PC-9 (cell line): ENCODE measurements at regions of chr17 and their contacts with region 1.

Region 1: DNA sequence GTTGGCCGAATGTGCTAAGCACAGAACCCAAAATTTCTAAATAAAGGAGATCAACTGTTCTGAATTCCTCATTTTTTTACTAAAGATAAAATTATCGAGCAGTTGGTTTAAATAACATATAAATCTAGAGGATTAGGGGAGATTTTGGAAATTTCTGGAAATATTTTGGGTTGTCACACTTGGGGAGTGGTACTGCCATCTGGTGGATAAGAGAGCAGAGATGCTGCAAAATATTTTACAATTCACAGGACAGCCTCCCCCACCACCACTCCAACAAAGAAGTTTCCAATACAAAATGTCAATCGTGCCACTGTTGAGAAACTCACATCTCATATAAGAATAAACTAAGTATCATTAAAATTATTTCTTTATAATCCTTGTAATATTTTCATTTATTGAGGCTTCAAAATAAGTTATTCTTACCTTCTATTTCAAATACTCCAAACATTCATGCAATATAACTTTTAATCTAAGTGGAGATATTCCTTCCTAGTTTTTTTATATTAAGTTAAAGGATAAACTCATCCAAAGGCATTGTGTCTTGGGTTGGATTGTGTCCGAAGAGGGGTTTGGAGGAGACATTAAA is 17.0 kb upstream of the ABCA8 start:
- DNase-seq: no peak
- H3K4me3 ChIP-seq: no peak overlapping the region
- H3K27ac ChIP-seq: no peak overlapping the region
- H3K4me1 ChIP-seq: no peaks in the 10 kb centered on the region
- H3K27me3 ChIP-seq: no peaks in the 10 kb centered on the region
- CTCF ChIP-seq: peak; percentile 78

Region 2: DNA sequence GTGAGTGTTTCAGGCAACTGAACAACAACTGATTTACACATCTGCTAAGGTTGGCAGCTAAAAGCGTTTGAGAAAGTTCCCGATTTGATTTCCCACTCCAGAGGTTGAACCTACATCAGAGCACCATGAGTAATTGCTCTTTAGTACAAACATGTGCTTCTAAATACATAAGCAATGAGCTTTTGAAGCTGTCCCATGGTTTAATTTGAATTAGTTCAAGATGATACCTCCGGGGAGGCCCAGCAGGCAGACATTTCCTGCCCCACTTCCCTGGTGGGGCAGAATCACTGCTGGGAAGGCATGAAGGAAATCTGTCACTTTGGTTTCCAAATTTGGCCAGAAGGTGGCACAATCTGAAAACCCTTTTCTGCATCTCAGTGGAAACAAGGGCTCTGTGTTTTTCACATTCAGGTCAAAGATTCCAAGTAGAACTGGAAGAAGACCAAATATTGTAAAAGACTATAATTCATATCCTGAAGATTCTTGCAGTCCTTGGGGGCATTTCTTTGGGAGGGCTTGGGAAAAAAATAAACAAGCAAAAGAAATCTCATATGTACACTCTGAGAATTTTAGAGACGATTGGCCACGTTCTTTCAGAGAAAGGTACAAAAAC is 194.9 kb before region 1 on chr17:
- CTCF ChIA-PET with region 1: no interaction called
- POLR2A ChIA-PET with region 1: no interaction called
- intact Hi-C with region 1: loop called (anchors 2 kb)
- DNase-seq: peak in 1 of 2 experiments; percentile 39
- H3K4me3 ChIP-seq: no peak overlapping the region
- H3K27ac ChIP-seq: no peak overlapping the region
- H3K4me1 ChIP-seq: no peaks in the 10 kb centered on the region
- H3K27me3 ChIP-seq: no peaks in the 10 kb centered on the region
- CTCF ChIP-seq: peak; percentile 80

Region 3: DNA sequence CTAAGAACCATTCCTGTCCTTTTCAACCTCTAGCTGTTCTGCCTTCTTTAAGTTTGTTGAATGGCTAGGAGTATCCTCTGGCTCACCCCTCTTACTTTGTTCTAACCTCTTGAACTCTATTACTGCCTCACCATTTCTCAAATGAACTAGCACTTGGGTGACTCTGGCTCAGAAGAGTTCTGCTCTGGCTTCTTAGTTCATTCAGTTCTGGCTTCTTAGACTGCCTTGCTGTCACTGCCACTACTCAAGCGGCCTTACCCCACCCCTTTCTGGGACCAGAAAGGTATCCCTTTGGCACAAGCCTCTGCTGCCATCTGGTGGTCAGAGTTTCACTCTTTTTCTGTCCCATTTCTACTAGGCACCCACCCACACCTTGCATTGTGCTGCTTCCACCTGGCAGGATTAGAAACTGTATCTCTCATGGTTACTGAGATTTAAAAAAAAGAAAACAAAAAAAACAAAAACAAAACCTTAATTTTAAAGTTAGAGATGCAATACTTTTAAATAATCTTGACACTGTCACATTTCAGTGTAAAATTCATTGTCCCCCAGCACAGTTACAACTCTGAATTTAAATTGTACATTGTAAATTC is 263.2 kb after region 1 on chr17:
- CTCF ChIA-PET with region 1: no interaction called
- POLR2A ChIA-PET with region 1: no interaction called
- intact Hi-C with region 1: loop called (anchors 1 kb)
- DNase-seq: peak; percentile 56 to 76
- H3K4me3 ChIP-seq: no peak overlapping the region
- H3K27ac ChIP-seq: no peak overlapping the region
- H3K4me1 ChIP-seq: no peaks in the 10 kb centered on the region
- H3K27me3 ChIP-seq: no peaks in the 10 kb centered on the region
- CTCF ChIP-seq: peak; percentile 92